Ascending aorta (tissue), 2 donors: ENCODE measurements at regions of chr1 and their contacts with region 1.

Region 1: GRCh38 chr1:229258031-229258756 is 12.7 kb upstream of the RAB4A start:
- DNase-seq: peak in 1 of 2 donors; percentile 79
- H3K4me3 ChIP-seq: no peak overlapping the region
- H3K27ac ChIP-seq: no peak overlapping the region
- H3K4me1 ChIP-seq: peaks cover 0 to 2% of the 10 kb centered on the region in 2 donors
- H3K27me3 ChIP-seq: no peaks in the 10 kb centered on the region
- CTCF ChIP-seq: peak; percentile 76 to 86 (median 81)

Region 2: DNA sequence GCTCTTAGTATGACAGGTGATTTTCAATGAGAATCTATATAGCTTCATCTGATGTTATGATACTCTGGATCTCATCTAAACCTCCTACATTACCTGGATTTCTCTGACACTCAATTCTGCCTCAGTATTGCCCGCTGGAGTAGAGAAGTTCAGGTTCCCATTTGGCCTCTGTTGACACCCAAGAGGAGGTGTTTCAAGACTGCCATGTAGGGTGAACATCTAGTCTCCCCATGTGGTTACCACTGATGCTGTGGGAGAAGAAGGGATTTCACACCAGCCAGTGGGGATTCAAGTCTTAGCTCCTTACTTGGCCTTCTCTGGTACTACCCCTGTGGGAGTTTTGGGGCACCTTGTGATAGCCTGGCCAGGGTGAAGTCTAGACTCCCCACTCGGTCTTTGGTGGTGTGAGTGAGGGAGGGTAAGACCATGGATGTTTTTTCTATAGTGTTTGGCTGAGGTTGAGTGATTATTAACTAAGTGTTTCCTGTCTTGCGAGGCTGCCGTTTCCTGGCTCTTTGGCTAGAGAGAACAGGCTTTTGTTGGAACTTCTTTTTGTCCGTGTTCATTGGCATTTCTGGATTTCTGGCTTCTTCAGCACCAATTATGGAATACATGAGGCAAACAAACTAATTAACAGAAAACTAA is 432.2 kb before region 1 on chr1:
- intact Hi-C with region 1: no loop called
- DNase-seq: no peak
- H3K4me3 ChIP-seq: no peak overlapping the region
- H3K27ac ChIP-seq: no peak overlapping the region
- H3K4me1 ChIP-seq: no peaks in the 10 kb centered on the region
- H3K27me3 ChIP-seq: no peaks in the 10 kb centered on the region
- CTCF ChIP-seq: no peak

Region 3: GRCh38 chr1:229452956-229453801 is 195.0 kb after region 1 on chr1:
- intact Hi-C with region 1: loop called (anchors 2 kb)
- DNase-seq: no peak
- H3K4me3 ChIP-seq: no peak overlapping the region
- H3K27ac ChIP-seq: no peak overlapping the region
- H3K4me1 ChIP-seq: no peaks in the 10 kb centered on the region
- H3K27me3 ChIP-seq: no peaks in the 10 kb centered on the region
- CTCF ChIP-seq: peak; percentile 28 to 49 (median 30)

Region 4: DNA sequence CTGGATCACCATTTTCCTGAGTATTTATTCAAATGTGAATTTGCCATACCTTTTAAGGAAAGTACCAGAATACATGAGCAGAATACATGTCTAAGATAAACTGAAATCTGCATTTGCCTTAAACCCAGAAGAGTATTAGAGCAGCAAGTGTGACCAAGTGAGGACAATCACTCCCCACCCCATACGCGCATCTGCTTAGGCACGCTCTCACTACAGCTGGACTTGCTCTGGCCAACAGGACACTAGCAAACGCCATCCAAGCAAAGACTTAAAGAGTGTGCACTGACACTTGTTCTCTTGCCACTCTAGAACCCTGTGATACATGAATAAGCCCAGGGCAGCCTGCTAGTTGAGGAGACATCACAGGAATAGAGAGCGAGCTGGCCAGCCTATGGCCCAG is 224.3 kb after region 1 on chr1:
- intact Hi-C with region 1: loop called (anchors 1 kb)
- DNase-seq: no peak
- H3K4me3 ChIP-seq: no peak overlapping the region
- H3K27ac ChIP-seq: no peak overlapping the region
- H3K4me1 ChIP-seq: no peaks in the 10 kb centered on the region
- H3K27me3 ChIP-seq: no peaks in the 10 kb centered on the region
- CTCF ChIP-seq: no peak